ENCODE measurements at regions of chr22 and their contacts with region 1.

Region 1: GRCh38 chr22:19429950-19430889 is 1.3 kb downstream of the HIRA start:
- DNase-seq: peak in 1 of 5 donors; percentile 28
- H3K4me3 ChIP-seq: peak overlapping the region; percentile 89
- H3K27ac ChIP-seq: no peak overlapping the region
- H3K4me1 ChIP-seq: peaks cover 10% of the 10 kb centered on the region
- H3K27me3 ChIP-seq: no peaks in the 10 kb centered on the region
- CTCF ChIP-seq: no peak
- EP300 ChIP-seq: no peak
- POLR2A ChIP-seq: no peak

Region 2: GRCh38 chr22:19291580-19292457 is 138.4 kb before region 1 on chr22 and contains the start of gene CLTCL1:
- intact Hi-C with region 1: loop called in 1 of 4 experiments (anchors 10 kb)
- DNase-seq: peak; percentile 82 to 89 (median 87)
- H3K4me3 ChIP-seq: peak within 1 kb of the TSS; percentile 72
- H3K27ac ChIP-seq: peak within 1 kb of the TSS; percentile 13 to 61
- H3K4me1 ChIP-seq: no peaks in the 10 kb centered on the region
- H3K27me3 ChIP-seq: no peaks in the 10 kb centered on the region
- CTCF ChIP-seq: no peak
- EP300 ChIP-seq: no peak
- POLR2A ChIP-seq: no peak
- total RNA-seq, gene CLTCL1: 2.8 to 8.9 (median 5.2) TPM

Region 3: GRCh38 chr22:19986410-19987341 is 556.5 kb after region 1 on chr22:
- intact Hi-C with region 1: no loop called
- DNase-seq: peak; percentile 77 to 88 (median 84)
- H3K4me3 ChIP-seq: peak overlapping the region; percentile 54
- H3K27ac ChIP-seq: peak overlapping the region in 1 of 2 donors; percentile 42
- H3K4me1 ChIP-seq: no peaks in the 10 kb centered on the region
- H3K27me3 ChIP-seq: no peaks in the 10 kb centered on the region
- CTCF ChIP-seq: no peak
- EP300 ChIP-seq: no peak
- POLR2A ChIP-seq: peak; percentile 56

Measured in ovary (tissue), 10 donors.